Activated CD4-positive, alpha-beta T cell treated with anti-CD3 and anti-CD28 coated beads for 36 hours (primary cell): ENCODE measurements at regions of chr3 and their contacts with region 1.

Region 1: DNA sequence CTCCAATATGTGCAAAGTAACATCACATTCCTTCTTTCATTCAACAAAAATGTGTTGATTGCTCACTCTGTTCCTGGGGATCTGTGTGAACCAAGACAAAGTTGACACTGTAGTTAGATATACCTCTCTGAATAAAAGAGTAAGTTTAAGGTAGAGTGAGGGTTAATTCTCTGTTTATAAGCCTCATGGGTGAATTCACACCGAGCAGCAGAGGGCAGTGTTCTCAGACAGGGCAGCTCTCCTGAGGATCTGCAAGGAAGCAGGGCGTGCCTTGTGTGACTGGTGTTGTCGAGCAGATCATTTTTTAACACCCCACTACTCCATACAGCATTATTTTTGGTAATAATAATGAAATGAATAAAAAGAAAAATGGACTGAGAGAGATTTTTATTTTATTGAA is 34.4 kb downstream of the PAQR9 start:
- DNase-seq: peak; percentile 72
- ATAC-seq: peak; percentile 65
- H3K4me3 Mint-ChIP-seq: no peak overlapping the region
- H3K27ac Mint-ChIP-seq: no peak overlapping the region
- H3K4me1 Mint-ChIP-seq: no peaks in the 10 kb centered on the region
- H3K27me3 Mint-ChIP-seq: peaks cover 16% of the 10 kb centered on the region

Region 2: GRCh38 chr3:142768338-142768737 is 160.8 kb before region 1 on chr3:
- CTCF ChIA-PET with region 1: no interaction called
- POLR2A ChIA-PET with region 1: no interaction called
- intact Hi-C with region 1: no loop called
- DNase-seq: no peak
- ATAC-seq: no peak
- H3K4me3 Mint-ChIP-seq: no peak overlapping the region
- H3K27ac Mint-ChIP-seq: no peak overlapping the region
- H3K4me1 Mint-ChIP-seq: no peaks in the 10 kb centered on the region
- H3K27me3 Mint-ChIP-seq: no peaks in the 10 kb centered on the region

Region 3: DNA sequence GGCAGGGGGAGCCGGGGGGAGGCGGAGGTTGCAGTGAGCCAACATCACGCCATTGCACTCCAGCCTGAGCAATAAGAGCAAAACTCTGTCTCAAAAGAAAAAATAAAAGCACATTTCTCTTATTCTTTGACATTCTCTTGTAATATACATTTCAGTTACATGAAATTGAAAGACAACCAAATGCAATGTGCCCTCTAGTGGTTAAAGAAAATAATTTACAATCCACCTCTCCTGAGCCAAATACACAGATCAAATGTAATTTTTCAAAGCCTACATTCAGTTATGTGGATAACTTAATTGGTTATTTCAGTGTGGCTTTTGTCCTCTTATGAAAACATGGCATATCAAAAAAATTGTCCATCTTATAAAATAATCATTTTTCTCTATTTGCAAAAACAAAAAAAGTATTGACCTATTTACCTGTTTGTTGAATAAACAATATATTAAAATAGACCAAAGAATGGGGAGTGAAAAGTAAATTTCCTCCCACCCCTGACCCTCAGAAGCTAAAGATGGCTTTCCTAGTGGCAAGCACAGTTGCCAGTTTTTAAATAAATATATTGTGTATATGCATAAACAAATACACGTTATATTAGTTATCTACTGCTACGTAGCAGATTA is 58.1 kb after region 1 on chr3:
- CTCF ChIA-PET with region 1: interaction called, 3 read pairs
- POLR2A ChIA-PET with region 1: no interaction called
- intact Hi-C with region 1: loop called in 1 of 2 experiments (anchors 5 kb)
- DNase-seq: no peak
- ATAC-seq: peak; percentile 51
- H3K4me3 Mint-ChIP-seq: no peak overlapping the region
- H3K27ac Mint-ChIP-seq: no peak overlapping the region
- H3K4me1 Mint-ChIP-seq: no peaks in the 10 kb centered on the region
- H3K27me3 Mint-ChIP-seq: peaks cover 14% of the 10 kb centered on the region

Region 4: GRCh38 chr3:142993958-142994442 is 64.9 kb after region 1 on chr3:
- CTCF ChIA-PET with region 1: interaction called, 3 read pairs
- POLR2A ChIA-PET with region 1: no interaction called
- intact Hi-C with region 1: loop called (anchors 1 to 5 kb)
- DNase-seq: peak; percentile 76
- ATAC-seq: peak; percentile 74
- H3K4me3 Mint-ChIP-seq: no peak overlapping the region
- H3K27ac Mint-ChIP-seq: no peak overlapping the region
- H3K4me1 Mint-ChIP-seq: peaks cover 4% of the 10 kb centered on the region
- H3K27me3 Mint-ChIP-seq: peaks cover 5% of the 10 kb centered on the region